Dendritic cell treated with granulocyte-macrophage colony-stimulating factor and Interleukin-4, amounts not matched to agents 40 ng/mL and 50 ng/mL, for 4 days (primary cell): ENCODE measurements at regions of chr9 and their contacts with region 1.

Region 1: GRCh38 chr9:121059998-121060636 is 10.0 kb upstream of the C5 start:
- H3K4me3 Mint-ChIP-seq: no peak overlapping the region
- H3K27ac Mint-ChIP-seq: no peak overlapping the region
- H3K4me1 Mint-ChIP-seq: peaks cover 6% of the 10 kb centered on the region
- H3K27me3 Mint-ChIP-seq: no peaks in the 10 kb centered on the region

Region 2: GRCh38 chr9:120755827-120756434 is 304.2 kb before region 1 on chr9:
- intact Hi-C with region 1: loop called (anchors 2 kb)
- H3K4me3 Mint-ChIP-seq: no peak overlapping the region
- H3K27ac Mint-ChIP-seq: no peak overlapping the region
- H3K4me1 Mint-ChIP-seq: peaks cover 57% of the 10 kb centered on the region
- H3K27me3 Mint-ChIP-seq: no peaks in the 10 kb centered on the region

Region 3: DNA sequence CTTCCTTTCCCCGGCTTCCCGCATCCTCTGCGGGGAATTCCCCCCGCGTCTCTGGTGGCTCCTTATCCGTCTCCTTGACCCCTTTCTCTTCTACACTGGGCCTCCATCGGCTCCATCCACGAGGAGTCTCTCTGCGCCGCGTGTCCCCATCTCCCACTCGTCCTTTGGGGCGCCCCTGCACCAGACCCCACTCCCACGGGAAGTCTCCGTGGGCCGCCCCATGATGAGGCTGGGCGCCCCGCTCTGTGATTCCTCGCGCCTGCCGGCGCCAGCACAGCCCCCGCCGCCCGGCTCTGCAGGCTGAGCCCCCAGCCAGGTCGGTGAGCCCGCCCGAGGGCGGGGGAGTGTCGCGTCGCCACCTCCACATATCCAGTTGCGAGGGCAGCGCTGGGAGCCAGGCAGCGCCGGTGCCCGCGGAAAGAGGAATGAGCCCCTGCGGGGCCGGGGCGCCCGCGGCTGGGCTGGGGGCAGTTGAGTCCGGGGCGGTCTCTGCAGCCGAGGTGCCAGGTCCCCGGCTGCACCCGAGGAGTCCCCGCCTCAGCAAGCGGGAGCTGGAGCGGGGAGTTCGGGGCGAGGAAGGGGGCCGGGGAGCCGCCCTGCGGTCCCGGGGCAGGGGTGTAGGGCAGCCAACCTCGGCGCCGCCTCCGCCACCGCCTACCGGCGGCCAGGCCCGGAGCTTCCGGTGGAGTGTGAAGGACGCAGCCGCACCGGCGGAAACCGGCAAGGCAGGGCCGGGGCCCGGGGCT is 131.5 kb before region 1 on chr9:
- intact Hi-C with region 1: no loop called
- H3K4me3 Mint-ChIP-seq: peak overlapping the region; percentile 75
- H3K27ac Mint-ChIP-seq: peak overlapping the region; percentile 77
- H3K4me1 Mint-ChIP-seq: peaks cover 81% of the 10 kb centered on the region
- H3K27me3 Mint-ChIP-seq: no peaks in the 10 kb centered on the region

Region 4: GRCh38 chr9:120985810-120986222 is 74.3 kb before region 1 on chr9:
- intact Hi-C with region 1: loop called (anchors 5 kb)
- H3K4me3 Mint-ChIP-seq: no peak overlapping the region
- H3K27ac Mint-ChIP-seq: no peak overlapping the region
- H3K4me1 Mint-ChIP-seq: no peaks in the 10 kb centered on the region
- H3K27me3 Mint-ChIP-seq: no peaks in the 10 kb centered on the region

Region 5: GRCh38 chr9:121085661-121086060 is 25.5 kb after region 1 on chr9:
- intact Hi-C with region 1: no loop called
- H3K4me3 Mint-ChIP-seq: no peak overlapping the region
- H3K27ac Mint-ChIP-seq: no peak overlapping the region
- H3K4me1 Mint-ChIP-seq: peaks cover 44% of the 10 kb centered on the region
- H3K27me3 Mint-ChIP-seq: no peaks in the 10 kb centered on the region

Region 6: GRCh38 chr9:121107041-121107440 is 46.9 kb after region 1 on chr9:
- intact Hi-C with region 1: no loop called
- H3K4me3 Mint-ChIP-seq: no peak overlapping the region
- H3K27ac Mint-ChIP-seq: no peak overlapping the region
- H3K4me1 Mint-ChIP-seq: peaks cover 29% of the 10 kb centered on the region
- H3K27me3 Mint-ChIP-seq: no peaks in the 10 kb centered on the region